ENCODE measurements at regions of chr18 and their contacts with region 1.

Region 1: GRCh38 chr18:11553098-11553940 is 56.1 kb upstream of the SLC35G4 start:
- DNase-seq: peak; percentile 17
- H3K4me3 ChIP-seq: no peak overlapping the region
- H3K27ac ChIP-seq: no peak overlapping the region
- H3K4me1 ChIP-seq: no peaks in the 10 kb centered on the region
- H3K27me3 ChIP-seq: no peaks in the 10 kb centered on the region
- CTCF ChIP-seq: peak; percentile 56 to 76 (median 64)
- POLR2A ChIP-seq: no peak

Region 2: DNA sequence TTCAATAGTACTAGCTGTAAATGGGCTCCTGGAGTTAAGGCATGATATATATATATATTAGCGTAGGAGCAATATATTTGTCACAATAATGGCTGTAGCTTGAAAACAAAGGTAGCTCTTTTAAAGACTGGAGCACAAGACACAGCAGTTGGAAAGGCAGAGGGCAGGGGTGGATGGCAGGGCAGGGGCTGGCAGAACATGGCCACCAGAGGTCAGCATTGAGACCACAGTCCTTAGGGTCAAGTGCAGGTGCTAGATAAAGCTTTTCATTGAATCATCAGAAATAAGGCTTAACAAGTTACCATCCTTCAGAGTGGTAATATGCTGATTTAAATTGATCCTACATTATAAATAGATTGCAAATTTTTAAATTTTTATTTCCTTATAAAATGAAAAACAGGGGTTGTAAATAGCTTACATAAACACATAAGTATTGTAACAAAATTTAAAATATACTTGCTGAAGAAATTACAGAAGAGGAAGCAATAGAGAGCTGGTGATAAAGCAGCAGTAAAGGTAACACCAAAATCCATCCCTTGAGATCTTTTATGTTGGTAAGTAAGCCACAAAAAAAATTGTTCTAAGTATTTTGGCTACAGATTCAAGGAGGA is 242.7 kb before region 1 on chr18:
- intact Hi-C with region 1: loop called (anchors 10 kb)
- DNase-seq: no peak
- H3K4me3 ChIP-seq: no peak overlapping the region
- H3K27ac ChIP-seq: no peak overlapping the region
- H3K4me1 ChIP-seq: no peaks in the 10 kb centered on the region
- H3K27me3 ChIP-seq: no peaks in the 10 kb centered on the region
- CTCF ChIP-seq: peak in 2 of 4 experiments; percentile 13 to 18
- POLR2A ChIP-seq: no peak

Region 3: DNA sequence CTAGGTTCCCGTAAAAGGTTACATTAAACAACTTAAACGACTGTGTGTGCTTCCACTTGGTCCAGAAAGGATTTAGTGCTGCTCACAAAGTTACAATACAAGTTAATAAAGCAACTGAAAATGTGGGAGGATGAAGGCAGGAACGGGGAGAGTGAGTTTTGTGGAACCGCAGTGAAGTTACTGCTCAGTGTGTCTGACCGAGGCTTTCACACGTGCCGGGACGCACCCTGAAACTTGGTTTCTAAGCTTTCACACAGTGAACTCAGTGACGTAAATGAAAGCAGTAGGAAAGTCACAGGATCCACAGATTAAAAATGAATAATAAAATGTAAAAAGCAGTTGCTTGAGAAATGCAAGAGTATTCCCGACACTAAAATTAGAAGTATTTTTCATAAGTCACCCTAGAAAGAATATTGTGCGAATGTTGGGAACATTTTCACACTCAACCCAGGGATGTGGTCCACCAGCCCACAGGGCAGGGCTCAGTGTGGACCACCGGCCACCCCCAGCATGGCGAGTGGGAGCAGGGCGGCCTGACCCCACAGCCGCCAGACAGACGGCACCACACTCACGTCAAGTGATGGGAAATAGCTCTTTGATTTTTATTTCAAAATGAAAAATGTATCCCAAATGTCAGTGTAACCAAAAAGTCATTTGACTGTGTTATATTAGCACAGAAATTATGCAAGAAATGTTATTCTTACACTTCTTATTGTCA is 265.3 kb after region 1 on chr18:
- intact Hi-C with region 1: no loop called
- DNase-seq: no peak
- H3K4me3 ChIP-seq: no peak overlapping the region
- H3K27ac ChIP-seq: no peak overlapping the region
- H3K4me1 ChIP-seq: no peaks in the 10 kb centered on the region
- H3K27me3 ChIP-seq: no peaks in the 10 kb centered on the region
- CTCF ChIP-seq: no peak
- POLR2A ChIP-seq: no peak